Motor neuron (in vitro differentiated cells): ENCODE measurements at regions of chr17 and their contacts with region 1.

Region 1: GRCh38 chr17:45584092-45585036 is 93.8 kb upstream of the PLEKHM1 start:
- ATAC-seq: peak; percentile 44 to 80 (median 73)
- H3K4me3 ChIP-seq: peak overlapping the region; percentile 63 to 98 (median 84)
- H3K27ac ChIP-seq: peak overlapping the region; percentile 84 to 86
- H3K4me1 ChIP-seq: peaks cover 12% of the 10 kb centered on the region in 2 donors

Region 2: DNA sequence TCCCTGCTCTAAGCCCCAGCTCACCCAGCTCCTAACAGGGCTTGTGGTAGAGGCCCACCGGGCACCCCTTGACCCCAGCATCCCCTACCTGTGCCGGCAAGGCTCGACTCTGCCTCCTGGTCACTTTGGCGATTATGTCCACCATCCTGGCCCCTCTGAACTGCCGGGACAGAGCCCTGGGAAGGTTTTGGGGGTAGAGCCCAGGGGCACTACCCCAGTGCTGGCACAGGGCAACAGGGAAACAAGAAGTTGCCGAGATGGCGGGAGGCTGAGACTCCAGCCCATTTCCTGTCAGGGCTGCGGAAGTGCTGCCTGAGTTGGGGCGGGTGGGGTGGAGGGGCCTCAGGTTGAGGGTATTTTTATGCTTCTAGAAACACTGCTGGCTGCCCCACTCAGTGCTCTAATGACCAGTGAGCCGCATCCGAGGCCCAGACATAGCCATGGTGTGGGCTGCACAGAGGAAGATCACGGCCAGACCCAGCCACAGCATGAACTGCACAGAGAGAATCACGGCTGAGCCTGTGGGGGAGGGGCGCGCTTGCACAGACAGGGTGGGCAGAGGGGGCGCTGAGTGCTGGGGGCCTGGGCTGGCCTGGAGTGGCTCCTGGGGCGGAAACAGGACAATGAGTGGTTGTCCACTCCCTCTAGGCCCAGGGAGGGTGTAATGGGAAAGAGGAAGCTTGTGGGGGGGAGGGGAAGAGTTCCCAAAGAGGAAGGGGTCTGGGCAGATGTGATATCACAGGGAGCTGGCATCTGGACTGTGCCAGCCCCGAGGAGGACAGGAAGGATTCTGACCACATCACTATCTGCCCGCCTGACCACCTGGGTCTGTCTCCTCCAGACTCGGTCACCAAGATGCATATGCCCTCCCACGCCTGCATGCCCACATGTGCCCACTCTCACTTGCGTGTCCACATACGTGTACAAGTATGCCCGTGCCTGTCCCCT is 173.9 kb before region 1 on chr17:
- in situ Hi-C with region 1: no loop called
- ATAC-seq: peak in 1 of 8 experiments; percentile 24
- H3K4me3 ChIP-seq: no peak overlapping the region
- H3K27ac ChIP-seq: no peak overlapping the region
- H3K4me1 ChIP-seq: peaks cover 4 to 11% of the 10 kb centered on the region in 2 donors

Region 3: DNA sequence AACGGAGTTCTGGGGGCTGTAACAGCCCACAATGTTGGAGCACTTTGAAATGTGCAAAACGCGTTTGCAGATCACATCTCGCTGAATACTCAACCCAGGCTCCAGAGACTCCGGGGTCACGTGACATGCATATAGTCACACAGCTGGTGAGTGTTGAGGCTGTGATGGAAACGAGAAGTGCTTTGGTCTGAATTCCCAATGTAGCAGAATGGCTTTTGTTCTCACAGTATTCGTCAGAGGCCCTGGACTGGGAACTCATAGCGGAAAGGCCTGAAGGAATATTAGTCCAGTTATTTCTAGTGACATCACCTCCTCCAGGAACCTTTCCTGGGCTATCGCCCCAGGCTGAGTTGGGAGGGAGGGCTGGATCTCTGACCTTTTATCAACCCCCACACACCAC is 104.0 kb after region 1 on chr17:
- in situ Hi-C with region 1: no loop called
- ATAC-seq: peak in 7 of 8 experiments; percentile 45 to 85 (median 62)
- H3K4me3 ChIP-seq: no peak overlapping the region
- H3K27ac ChIP-seq: no peak overlapping the region
- H3K4me1 ChIP-seq: peaks cover 16 to 22% of the 10 kb centered on the region in 2 donors

Region 4: DNA sequence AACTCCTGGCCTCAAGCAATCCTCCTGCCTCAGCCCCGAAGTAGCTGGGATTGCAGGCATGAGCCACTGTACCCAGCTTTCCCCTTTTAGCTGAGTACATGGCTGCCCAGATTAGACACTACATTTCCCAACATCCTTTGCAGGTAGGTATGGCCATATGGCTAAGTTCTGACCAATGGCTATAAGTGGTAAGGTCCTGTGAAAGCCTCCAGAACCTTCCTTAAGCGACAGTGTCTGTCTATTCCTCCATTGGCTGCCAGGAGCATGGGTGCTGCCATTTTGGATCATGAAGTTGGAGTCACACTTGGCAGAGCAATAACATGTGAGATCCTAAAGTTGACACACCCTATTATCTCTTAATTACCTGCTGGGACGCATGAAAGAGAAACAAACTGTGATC is 175.4 kb after region 1 on chr17:
- in situ Hi-C with region 1: no loop called
- ATAC-seq: peak in 1 of 8 experiments; percentile 61
- H3K4me3 ChIP-seq: no peak overlapping the region
- H3K27ac ChIP-seq: no peak overlapping the region
- H3K4me1 ChIP-seq: peaks cover 0 to 3% of the 10 kb centered on the region in 2 donors

Region 5: GRCh38 chr17:46266656-46267544 is 682.5 kb after region 1 on chr17:
- in situ Hi-C with region 1: loop called in 2 of 9 experiments (anchors 25 kb)
- ATAC-seq: peak; percentile 85 to 97 (median 91)
- H3K4me3 ChIP-seq: peak overlapping the region; percentile 47 to 95 (median 60)
- H3K27ac ChIP-seq: peak overlapping the region; percentile 76 to 82
- H3K4me1 ChIP-seq: peaks cover 5 to 9% of the 10 kb centered on the region in 2 donors